Activated naive CD4-positive, alpha-beta T cell treated with anti-CD3 and anti-CD28 coated beads for 36 hours (primary cell): ENCODE measurements at regions of chrX and their contacts with region 1.

Region 1: DNA sequence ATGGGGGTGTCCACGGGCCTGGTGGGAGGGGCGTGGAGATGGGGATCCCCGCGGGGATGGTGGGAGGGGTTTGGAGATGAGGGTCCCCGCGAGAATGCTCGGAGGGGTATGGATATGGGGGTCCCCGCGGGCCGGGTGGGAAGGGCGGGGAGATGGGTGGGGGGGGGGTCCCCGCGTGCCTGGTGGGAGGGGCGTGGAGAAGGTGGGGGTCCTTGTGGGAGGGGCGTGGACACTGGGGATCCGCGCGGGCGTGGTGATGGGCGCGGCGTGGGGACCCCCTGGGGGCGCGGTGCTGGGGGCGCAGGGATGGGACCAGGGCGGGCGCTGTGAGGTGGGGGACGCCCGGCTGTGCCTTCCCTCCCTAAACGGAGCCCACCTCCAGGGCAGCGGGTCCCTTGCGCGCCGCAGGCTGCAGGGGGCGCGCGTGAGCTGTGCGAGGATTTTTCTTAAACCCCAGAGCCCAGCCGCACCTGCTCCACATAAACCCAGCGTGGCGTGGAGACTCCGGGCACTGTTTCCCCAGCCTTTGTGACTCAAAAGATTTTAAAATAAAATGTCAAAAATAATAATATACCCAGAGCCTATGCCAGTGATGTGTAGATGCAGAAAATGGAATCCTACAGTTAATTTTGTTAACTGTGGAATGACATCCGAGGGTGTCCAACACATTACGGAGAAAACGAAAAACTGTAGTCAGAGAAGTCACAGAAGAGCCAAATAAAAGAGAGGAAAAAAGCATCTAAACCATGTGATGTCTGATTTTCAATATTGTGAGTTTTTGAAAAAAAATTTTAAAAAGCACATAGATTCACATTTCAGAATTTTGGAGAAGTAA is 1.5 kb upstream of the ASMTL start:
- DNase-seq: peak; percentile 96
- H3K4me3 Mint-ChIP-seq: peak overlapping the region; percentile 56
- H3K27ac Mint-ChIP-seq: peak overlapping the region; percentile 10
- H3K4me1 Mint-ChIP-seq: peaks cover 18% of the 10 kb centered on the region
- H3K27me3 Mint-ChIP-seq: no peaks in the 10 kb centered on the region

Region 2: DNA sequence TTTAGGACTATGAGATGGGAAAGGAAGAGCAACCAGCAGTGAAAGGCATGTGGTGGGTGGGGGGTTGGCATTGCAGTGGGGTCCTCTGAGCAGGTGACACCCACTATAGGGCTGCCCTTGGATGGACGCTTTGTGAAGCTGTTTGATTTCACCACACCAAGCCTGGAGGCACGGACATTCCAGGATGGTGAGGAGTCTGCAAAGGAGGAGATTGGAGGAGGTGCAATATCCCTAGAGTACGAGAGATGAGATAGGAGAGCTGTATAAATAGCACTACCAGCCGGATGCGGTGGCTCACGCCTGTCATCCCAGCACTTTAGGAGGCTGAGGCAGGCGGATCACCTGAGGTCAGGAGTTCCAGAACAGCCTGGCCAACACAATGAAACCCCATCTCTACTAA is 781.2 kb before region 1 on chrX:
- CTCF ChIA-PET with region 1: no interaction called
- intact Hi-C with region 1: no loop called
- DNase-seq: no peak
- H3K4me3 Mint-ChIP-seq: no peak overlapping the region
- H3K27ac Mint-ChIP-seq: no peak overlapping the region
- H3K4me1 Mint-ChIP-seq: no peaks in the 10 kb centered on the region
- H3K27me3 Mint-ChIP-seq: peaks cover 4% of the 10 kb centered on the region

Region 3: GRCh38 chrX:866441-866990 is 587.7 kb before region 1 on chrX:
- CTCF ChIA-PET with region 1: no interaction called
- intact Hi-C with region 1: no loop called
- DNase-seq: no peak
- H3K4me3 Mint-ChIP-seq: no peak overlapping the region
- H3K27ac Mint-ChIP-seq: no peak overlapping the region
- H3K4me1 Mint-ChIP-seq: no peaks in the 10 kb centered on the region
- H3K27me3 Mint-ChIP-seq: peaks cover 12% of the 10 kb centered on the region

Region 4: GRCh38 chrX:1072637-1073377 is 381.4 kb before region 1 on chrX:
- CTCF ChIA-PET with region 1: no interaction called
- intact Hi-C with region 1: no loop called
- DNase-seq: no peak
- H3K4me3 Mint-ChIP-seq: no peak overlapping the region
- H3K27ac Mint-ChIP-seq: no peak overlapping the region
- H3K4me1 Mint-ChIP-seq: peaks cover 5% of the 10 kb centered on the region
- H3K27me3 Mint-ChIP-seq: peaks cover 13% of the 10 kb centered on the region

Region 5: DNA sequence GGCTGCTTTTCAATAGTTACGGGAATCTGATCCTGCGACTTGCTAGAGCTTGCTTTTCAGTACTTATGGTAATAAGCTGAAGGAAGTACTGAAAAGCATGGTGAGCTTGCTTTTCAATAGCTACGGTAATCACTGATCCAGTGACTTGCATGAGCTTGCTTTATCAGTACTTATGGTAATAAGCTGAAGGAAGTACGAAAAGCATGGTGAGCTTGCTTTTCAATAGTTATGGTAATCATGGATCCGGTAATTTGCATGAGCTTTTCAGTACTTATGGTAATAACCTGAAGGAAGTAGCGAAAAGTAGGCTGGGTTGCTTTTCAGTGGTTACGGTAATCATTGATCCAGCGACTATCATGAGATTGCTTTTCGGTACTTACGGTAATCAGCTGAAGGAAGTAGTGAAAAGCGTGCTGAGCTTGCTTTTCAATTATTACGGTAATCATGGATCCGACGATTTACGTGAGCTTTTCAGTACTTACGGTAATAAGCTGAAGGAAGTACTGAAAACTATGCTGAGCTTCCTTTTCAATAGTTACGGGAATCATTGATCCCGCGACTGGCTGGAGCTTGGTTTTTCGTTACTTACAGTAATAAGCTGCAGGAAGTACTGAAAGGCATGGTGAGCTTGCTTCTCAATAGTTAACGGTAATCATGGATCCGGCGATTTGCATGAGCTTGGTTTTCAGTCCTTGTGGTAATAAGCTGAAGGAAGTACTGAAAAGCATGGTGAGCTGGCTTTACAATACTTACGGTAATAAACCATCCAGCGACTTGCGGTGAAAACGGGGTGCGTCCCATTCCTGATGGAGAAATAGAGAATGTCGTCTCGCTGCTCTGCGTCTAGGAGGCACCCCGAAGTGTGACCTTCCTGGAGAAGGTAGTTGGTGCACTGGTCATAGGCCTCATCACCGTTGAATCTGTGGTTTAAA is 248.2 kb before region 1 on chrX:
- CTCF ChIA-PET with region 1: no interaction called
- intact Hi-C with region 1: loop called (anchors 2 kb)
- DNase-seq: peak; percentile 67
- H3K4me3 Mint-ChIP-seq: peak overlapping the region; percentile 72
- H3K27ac Mint-ChIP-seq: peak overlapping the region; percentile 72
- H3K4me1 Mint-ChIP-seq: peaks cover 17% of the 10 kb centered on the region
- H3K27me3 Mint-ChIP-seq: no peaks in the 10 kb centered on the region

Region 6: GRCh38 chrX:1391707-1392375 is 62.3 kb before region 1 on chrX and contains the start of gene SLC25A6:
- CTCF ChIA-PET with region 1: no interaction called
- intact Hi-C with region 1: loop called (anchors 1 kb)
- DNase-seq: peak; percentile 99
- H3K4me3 Mint-ChIP-seq: peak within 1 kb of the TSS; percentile 91
- H3K27ac Mint-ChIP-seq: peak within 1 kb of the TSS; percentile 90
- H3K4me1 Mint-ChIP-seq: peaks cover 63% of the 10 kb centered on the region
- H3K27me3 Mint-ChIP-seq: no peaks in the 10 kb centered on the region
- total RNA-seq, gene SLC25A6: 457 to 463 TPM

Region 7: GRCh38 chrX:1580735-1581531 is 126.8 kb after region 1 on chrX:
- CTCF ChIA-PET with region 1: no interaction called
- intact Hi-C with region 1: loop called (anchors 1 kb)
- DNase-seq: peak; percentile 92
- H3K4me3 Mint-ChIP-seq: no peak overlapping the region
- H3K27ac Mint-ChIP-seq: no peak overlapping the region
- H3K4me1 Mint-ChIP-seq: peaks cover 18% of the 10 kb centered on the region
- H3K27me3 Mint-ChIP-seq: no peaks in the 10 kb centered on the region

Region 8: DNA sequence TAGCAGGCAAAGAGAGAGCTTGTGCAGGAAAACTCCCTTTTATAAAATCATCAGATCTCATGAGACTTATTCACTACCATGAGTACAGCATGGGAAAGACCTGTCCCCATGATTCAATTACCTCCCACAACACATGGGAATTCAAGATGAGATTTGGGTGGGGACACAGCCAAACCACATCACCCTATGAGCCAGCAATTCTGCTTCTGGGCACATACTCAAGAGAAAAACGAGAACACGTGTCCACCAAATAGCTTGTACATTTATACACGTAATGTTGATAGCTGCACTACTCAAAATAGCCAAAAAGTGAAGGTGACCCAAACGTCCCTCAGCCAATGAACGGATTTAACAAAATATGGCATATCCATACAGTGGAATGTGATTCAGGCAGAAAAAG is 1141.1 kb after region 1 on chrX:
- CTCF ChIA-PET with region 1: no interaction called
- intact Hi-C with region 1: loop called (anchors 2 kb)
- DNase-seq: no peak
- H3K4me3 Mint-ChIP-seq: no peak overlapping the region
- H3K27ac Mint-ChIP-seq: no peak overlapping the region
- H3K4me1 Mint-ChIP-seq: no peaks in the 10 kb centered on the region
- H3K27me3 Mint-ChIP-seq: no peaks in the 10 kb centered on the region

Region 9: GRCh38 chrX:2696698-2697215 is 1242.6 kb after region 1 on chrX:
- CTCF ChIA-PET with region 1: no interaction called
- intact Hi-C with region 1: loop called (anchors 5 kb)
- DNase-seq: peak; percentile 76
- H3K4me3 Mint-ChIP-seq: peak overlapping the region; percentile 58
- H3K27ac Mint-ChIP-seq: peak overlapping the region; percentile 99
- H3K4me1 Mint-ChIP-seq: peaks cover 80% of the 10 kb centered on the region
- H3K27me3 Mint-ChIP-seq: no peaks in the 10 kb centered on the region